Stomach (tissue), 19 donors: ENCODE measurements at regions of chr2 and their contacts with region 1.

Region 1: DNA sequence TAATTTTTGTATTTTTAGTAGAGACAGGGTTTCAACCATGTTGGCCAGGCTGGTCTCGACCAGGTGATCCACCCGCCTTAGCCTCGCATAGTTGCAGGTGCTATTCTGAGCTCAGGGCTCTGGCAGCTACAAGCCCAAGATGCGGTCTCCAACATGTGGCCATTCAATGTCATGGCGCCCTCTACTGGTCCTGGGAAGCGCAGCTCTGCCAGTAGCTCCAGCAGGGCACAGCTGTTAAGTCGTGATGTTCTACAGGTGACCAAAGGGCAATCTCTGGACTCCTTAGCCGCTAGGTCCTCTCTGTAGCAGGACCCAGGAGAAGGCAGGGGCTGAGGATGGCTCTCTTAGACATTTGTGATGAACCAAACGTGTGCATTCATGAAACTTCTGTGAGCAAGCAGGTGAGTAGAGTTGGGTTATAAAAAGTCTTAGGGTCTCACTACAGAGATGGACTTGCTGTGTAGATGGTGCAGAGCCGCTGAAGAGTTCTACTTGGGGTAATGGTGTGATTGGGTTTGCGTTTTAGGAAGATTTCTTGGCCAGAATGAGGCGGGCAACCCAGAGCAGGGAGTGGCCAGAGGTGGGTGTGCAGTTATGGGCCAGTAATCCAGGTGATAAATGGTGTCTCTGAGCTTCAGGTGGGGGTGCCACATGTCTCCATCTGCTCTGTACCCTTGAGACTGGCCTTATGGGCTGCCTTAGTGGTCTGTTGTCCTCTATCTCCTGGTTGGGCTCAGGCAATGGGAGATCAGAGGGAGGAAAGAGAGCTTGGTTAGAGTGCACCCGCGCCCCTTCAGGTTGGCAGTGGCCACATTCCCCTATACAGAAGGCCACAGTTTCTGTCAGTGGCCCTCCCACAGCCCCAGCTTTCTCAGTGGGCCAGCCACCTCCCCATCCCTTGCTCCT is 31.0 kb downstream of the IL37 start:
- DNase-seq: peak; percentile 81 to 93
- H3K4me3 ChIP-seq: no peak overlapping the region
- H3K27ac ChIP-seq: no peak overlapping the region
- H3K4me1 ChIP-seq: peaks cover 11 to 42% (median 23%) of the 10 kb centered on the region in 4 donors
- H3K27me3 ChIP-seq: no peaks in the 10 kb centered on the region
- CTCF ChIP-seq: peak in 5 of 7 experiments; percentile 42 to 68 (median 58)
- EP300 ChIP-seq: no peak
- POLR2A ChIP-seq: no peak

Region 2: GRCh38 chr2:112749755-112750559 is 192.0 kb before region 1 on chr2:
- intact Hi-C with region 1: loop called (anchors 10 kb)
- DNase-seq: peak; percentile 75 to 92
- H3K4me3 ChIP-seq: no peak overlapping the region
- H3K27ac ChIP-seq: no peak overlapping the region
- H3K4me1 ChIP-seq: peaks cover 0 to 33% (median 16%) of the 10 kb centered on the region in 4 donors
- H3K27me3 ChIP-seq: no peaks in the 10 kb centered on the region
- CTCF ChIP-seq: peak in 5 of 7 experiments; percentile 75 to 90 (median 84)
- EP300 ChIP-seq: no peak
- POLR2A ChIP-seq: no peak